ENCODE measurements at regions of chr4 and their contacts with region 1.

Region 1: DNA sequence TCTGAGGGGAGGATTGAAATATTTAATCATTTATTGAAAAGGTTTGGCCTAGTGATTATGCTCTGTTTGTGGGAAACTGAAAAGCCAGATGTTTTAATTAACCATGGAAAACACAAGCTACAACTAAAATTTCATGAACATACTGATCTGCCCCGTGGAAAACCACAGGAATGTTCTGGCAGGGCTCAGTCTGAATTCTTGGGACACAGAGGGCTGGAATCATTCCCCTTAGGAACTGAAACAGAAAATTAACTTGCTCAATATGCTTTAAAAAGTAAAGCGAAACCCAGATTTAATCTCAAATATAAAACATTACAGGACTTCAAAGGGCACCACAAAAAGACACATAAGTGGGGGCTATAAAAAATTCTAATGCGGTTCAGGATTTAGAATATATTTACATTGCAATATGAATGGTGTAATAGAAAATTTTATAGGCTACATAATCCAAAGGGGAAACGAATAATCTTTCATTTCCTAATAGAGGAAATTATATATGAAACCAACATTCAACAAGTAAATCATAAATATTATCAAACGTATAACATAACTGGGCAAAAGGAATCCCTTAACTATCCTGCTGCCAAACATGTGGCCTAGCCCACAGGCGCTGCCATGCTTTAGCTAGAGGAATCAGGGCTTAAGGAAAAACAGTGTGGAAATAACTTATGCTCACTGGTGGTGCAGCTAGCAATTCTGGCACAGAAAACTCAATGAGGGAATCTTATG is 70.9 kb downstream of the APBB2 start:
- DNase-seq: peak; percentile 92
- ATAC-seq: peak; percentile 78
- H3K4me3 ChIP-seq: no peak overlapping the region
- H3K27ac ChIP-seq: peak overlapping the region; percentile 97
- H3K4me1 ChIP-seq: peaks cover 35% of the 10 kb centered on the region
- H3K27me3 ChIP-seq: no peaks in the 10 kb centered on the region
- CTCF ChIP-seq: no peak
- POLR2A ChIP-seq: no peak
- RAD21 ChIP-seq: no peak

Region 2: DNA sequence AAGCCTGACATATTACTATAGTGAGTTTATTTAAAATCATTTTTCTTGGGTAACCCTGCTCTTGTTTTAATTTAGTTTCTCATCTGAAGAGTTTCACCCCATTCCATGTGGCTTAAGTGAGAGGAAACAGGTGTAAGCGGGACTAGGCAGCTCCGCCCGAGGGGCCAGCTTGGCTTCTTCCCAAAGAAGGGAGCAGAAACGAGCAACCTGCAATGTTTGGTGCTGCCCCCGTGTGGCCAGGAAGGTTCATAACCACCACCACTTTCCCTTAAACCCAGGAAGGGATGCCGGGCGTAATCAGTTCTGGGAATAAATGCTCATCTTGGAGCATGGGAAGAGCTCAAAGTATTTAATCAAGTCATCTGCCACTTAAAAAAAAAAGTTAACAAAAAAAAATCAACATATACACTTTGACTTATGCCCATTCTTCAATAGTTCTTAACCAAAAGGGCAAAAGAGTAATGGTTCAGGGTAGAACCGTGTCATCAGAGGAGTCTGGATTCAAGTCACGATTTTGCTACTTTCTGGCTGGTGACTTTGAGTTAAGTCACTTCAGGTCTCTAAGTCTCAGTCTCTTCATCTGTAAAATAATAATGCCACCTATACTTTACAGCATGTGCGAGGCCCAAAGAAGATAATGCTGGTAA is 245.8 kb before region 1 on chr4:
- CTCF ChIA-PET with region 1: no interaction called
- POLR2A ChIA-PET with region 1: no interaction called
- dilution Hi-C with region 1: no loop called
- in situ Hi-C with region 1: no loop called
- intact Hi-C with region 1: no loop called
- DNase-seq: peak; percentile 51
- ATAC-seq: peak; percentile 74
- H3K4me3 ChIP-seq: no peak overlapping the region
- H3K27ac ChIP-seq: no peak overlapping the region
- H3K4me1 ChIP-seq: peaks cover 2% of the 10 kb centered on the region
- H3K27me3 ChIP-seq: no peaks in the 10 kb centered on the region
- CTCF ChIP-seq: peak; percentile 62
- POLR2A ChIP-seq: no peak
- RAD21 ChIP-seq: peak; percentile 50

Region 3: GRCh38 chr4:40953283-40954087 is 190.0 kb before region 1 on chr4:
- CTCF ChIA-PET with region 1: no interaction called
- POLR2A ChIA-PET with region 1: no interaction called
- dilution Hi-C with region 1: no loop called
- in situ Hi-C with region 1: no loop called
- intact Hi-C with region 1: no loop called
- DNase-seq: no peak
- ATAC-seq: no peak
- H3K4me3 ChIP-seq: no peak overlapping the region
- H3K27ac ChIP-seq: no peak overlapping the region
- H3K4me1 ChIP-seq: peaks cover 3% of the 10 kb centered on the region; the same call in 1 of the 2 replicates
- H3K27me3 ChIP-seq: no peaks in the 10 kb centered on the region
- CTCF ChIP-seq: no peak
- POLR2A ChIP-seq: no peak
- RAD21 ChIP-seq: no peak

Region 4: GRCh38 chr4:41106081-41106480 is 37.4 kb before region 1 on chr4:
- CTCF ChIA-PET with region 1: no interaction called
- POLR2A ChIA-PET with region 1: no interaction called
- dilution Hi-C with region 1: no loop called
- in situ Hi-C with region 1: no loop called
- intact Hi-C with region 1: loop called (anchors 5 kb)
- DNase-seq: no peak
- ATAC-seq: no peak
- H3K4me3 ChIP-seq: no peak overlapping the region
- H3K27ac ChIP-seq: no peak overlapping the region
- H3K4me1 ChIP-seq: no peaks in the 10 kb centered on the region; the same call in 1 of the 2 replicates
- H3K27me3 ChIP-seq: no peaks in the 10 kb centered on the region
- CTCF ChIP-seq: no peak
- POLR2A ChIP-seq: no peak
- RAD21 ChIP-seq: no peak

Region 5: GRCh38 chr4:41120297-41121217 is 22.9 kb before region 1 on chr4:
- CTCF ChIA-PET with region 1: no interaction called
- POLR2A ChIA-PET with region 1: no interaction called
- dilution Hi-C with region 1: no loop called
- in situ Hi-C with region 1: no loop called
- intact Hi-C with region 1: no loop called
- DNase-seq: peak; percentile 59
- ATAC-seq: peak; percentile 44
- H3K4me3 ChIP-seq: no peak overlapping the region
- H3K27ac ChIP-seq: peak overlapping the region; percentile 19; the same call in 1 of the 2 replicates
- H3K4me1 ChIP-seq: peaks cover 7% of the 10 kb centered on the region
- H3K27me3 ChIP-seq: no peaks in the 10 kb centered on the region
- CTCF ChIP-seq: no peak
- POLR2A ChIP-seq: no peak
- RAD21 ChIP-seq: no peak

Region 6: DNA sequence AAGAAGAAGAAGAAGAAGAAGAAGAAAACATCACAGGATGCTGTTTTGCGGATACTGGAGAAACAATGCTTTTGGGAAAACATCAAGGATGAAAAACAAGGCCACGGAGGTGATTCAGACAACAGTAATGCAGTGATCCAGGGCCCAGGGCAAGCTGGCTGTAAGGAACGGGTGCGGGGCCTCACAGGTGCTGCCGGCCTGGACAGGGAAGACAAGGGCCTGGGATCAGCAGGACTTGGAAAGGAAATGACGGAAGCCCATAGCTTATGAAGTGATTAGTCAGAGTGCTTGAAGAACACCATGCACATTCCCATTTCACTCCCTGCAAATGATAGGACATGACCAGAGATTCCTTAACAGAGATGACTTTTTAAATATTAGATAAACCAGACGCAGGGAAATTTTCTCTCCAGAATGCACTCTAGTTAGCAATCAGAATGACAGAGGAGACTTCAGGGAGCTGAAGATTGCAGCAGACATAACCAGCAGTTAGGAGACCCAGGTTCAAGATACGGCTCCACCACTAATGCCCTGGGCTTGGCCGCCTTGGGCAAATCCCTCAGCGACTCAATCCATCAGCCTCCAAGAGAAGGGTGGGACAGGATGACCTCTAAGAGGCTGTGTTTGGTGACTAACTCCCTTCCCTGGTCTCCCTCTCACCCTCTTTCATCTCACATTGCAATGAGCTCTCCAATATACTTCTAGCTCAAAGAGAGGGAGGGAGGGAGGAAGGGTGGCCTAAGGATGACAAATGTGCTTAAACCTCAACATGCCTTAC is 16.7 kb after region 1 on chr4:
- CTCF ChIA-PET with region 1: interaction called, 3 read pairs
- POLR2A ChIA-PET with region 1: interaction called, 10 read pairs
- dilution Hi-C with region 1: no loop called
- in situ Hi-C with region 1: no loop called
- intact Hi-C with region 1: no loop called
- DNase-seq: peak; percentile 96
- ATAC-seq: peak; percentile 77
- H3K4me3 ChIP-seq: no peak overlapping the region
- H3K27ac ChIP-seq: no peak overlapping the region
- H3K4me1 ChIP-seq: peaks cover 16% of the 10 kb centered on the region
- H3K27me3 ChIP-seq: no peaks in the 10 kb centered on the region
- CTCF ChIP-seq: no peak
- POLR2A ChIP-seq: no peak
- RAD21 ChIP-seq: no peak

Region 7: DNA sequence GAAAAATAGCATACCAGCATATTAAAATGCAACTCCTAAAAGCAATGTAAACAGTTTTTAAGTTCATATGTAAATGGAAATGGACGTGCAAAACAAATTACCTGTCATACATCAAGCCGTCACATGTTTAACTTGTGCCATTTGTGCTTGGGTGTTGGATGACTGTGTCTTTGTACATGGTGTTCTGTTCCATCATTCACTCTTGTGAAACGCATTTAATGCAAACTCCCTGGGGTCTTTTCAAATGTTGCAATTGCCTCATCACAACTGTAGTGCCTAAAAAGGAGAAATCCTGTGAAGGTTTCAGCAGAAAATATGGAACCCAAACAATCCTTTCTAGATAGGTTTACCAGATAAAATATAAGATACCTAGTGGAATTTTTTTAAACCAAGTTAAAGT is 552.7 kb after region 1 on chr4:
- CTCF ChIA-PET with region 1: no interaction called
- POLR2A ChIA-PET with region 1: no interaction called
- dilution Hi-C with region 1: no loop called
- in situ Hi-C with region 1: no loop called
- intact Hi-C with region 1: no loop called
- DNase-seq: no peak
- ATAC-seq: no peak
- H3K4me3 ChIP-seq: no peak overlapping the region
- H3K27ac ChIP-seq: no peak overlapping the region
- H3K4me1 ChIP-seq: no peaks in the 10 kb centered on the region
- H3K27me3 ChIP-seq: peaks cover 17% of the 10 kb centered on the region
- CTCF ChIP-seq: no peak
- POLR2A ChIP-seq: no peak
- RAD21 ChIP-seq: no peak